ENCODE measurements at regions of chr4 and their contacts with region 1.

Region 1: GRCh38 chr4:139642364-139642763 is 23.3 kb upstream of the MGST2 start:
- DNase-seq: no peak
- H3K4me3 ChIP-seq: no peak overlapping the region
- H3K4me1 ChIP-seq: no peaks in the 10 kb centered on the region
- H3K27me3 ChIP-seq: no peaks in the 10 kb centered on the region

Region 2: GRCh38 chr4:138910607-138911336 is 731.6 kb before region 1 on chr4:
- in situ Hi-C with region 1: no loop called
- DNase-seq: peak; percentile 12 to 53
- H3K4me3 ChIP-seq: no peak overlapping the region
- H3K4me1 ChIP-seq: peaks cover 13% of the 10 kb centered on the region
- H3K27me3 ChIP-seq: no peaks in the 10 kb centered on the region

Region 3: DNA sequence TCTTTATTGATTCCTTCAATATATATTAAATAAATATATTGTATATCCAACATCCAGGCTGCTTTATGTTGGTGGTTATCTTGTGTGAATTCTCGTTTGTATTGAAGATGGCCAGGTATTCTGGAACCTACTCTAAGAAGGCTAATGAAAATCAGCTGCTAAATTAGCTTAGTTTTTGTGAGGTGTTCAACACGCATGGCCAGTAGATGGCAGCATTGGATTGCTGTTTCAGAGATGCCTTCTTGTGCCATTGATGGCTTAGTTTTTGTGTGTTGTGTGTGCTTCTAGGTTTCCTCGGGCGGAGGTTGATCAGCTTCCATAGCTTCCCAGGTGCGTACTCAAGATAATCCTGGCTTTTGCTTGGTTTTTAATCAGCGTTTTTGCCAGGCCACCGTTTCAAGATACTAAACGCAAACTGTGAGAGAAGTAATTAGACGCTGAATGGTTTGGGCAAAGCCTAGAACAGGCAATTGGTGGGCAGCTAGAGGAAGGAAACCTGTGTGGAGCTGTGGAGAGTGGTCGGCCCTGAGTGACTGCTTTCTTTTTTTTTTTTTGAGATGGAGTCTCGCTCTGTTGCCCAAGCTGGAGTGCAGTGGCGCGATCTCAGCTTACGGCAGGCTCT is 611.6 kb before region 1 on chr4:
- in situ Hi-C with region 1: loop called (anchors 10 kb)
- DNase-seq: peak; percentile 75 to 83
- H3K4me3 ChIP-seq: no peak overlapping the region
- H3K4me1 ChIP-seq: peaks cover 2% of the 10 kb centered on the region; the same call in 1 of the 2 replicates
- H3K27me3 ChIP-seq: no peaks in the 10 kb centered on the region

Region 4: DNA sequence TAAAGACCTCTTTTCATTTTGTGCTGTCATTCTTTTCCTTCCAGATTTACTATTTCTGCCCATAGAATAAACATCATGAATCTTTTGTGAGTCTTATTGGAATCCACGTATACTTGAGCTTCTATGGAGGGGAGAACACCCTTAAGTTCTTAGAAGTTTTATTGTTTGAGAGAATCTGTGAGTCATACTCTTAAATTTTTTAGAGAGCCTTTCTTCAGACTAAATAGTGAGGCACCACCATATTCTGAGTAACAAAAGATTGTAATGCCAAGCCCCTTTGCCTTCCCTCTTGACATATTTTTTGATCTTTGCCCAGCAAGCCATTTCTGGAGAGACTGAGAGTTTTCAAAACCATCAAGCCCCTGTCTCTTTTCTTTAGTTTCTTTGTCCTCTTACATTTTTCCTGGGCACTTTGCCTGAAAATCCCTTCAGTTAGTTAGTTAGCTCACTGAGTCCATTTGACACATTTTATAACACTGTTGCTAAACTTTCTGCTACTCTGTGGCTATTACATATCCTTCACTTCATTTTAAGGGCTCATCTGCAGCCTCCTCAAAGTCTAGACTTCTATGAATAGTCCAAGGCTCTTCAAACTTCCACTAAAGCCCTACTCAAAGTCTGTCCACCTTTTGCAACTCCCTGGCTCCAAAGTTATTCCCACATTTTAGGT is 274.8 kb before region 1 on chr4:
- in situ Hi-C with region 1: no loop called
- DNase-seq: peak in 1 of 2 experiments; percentile 64
- H3K4me3 ChIP-seq: no peak overlapping the region
- H3K4me1 ChIP-seq: peaks cover 5% of the 10 kb centered on the region
- H3K27me3 ChIP-seq: no peaks in the 10 kb centered on the region